Activated T-helper 1 cell treated with anti-CD3 and anti-CD28 coated beads, Interleukin-12 subunit alpha, Interleukin-12 subunit beta, Interleukin-2, Interleukin-4 antibody, amounts not matched to agents 30 ng/mL and 10 ng/mL and 1 ng/mL, durations not matched to agents 14 hours and 24 hours and 36 hours (primary cell): ENCODE measurements at regions of chr7 and their contacts with region 1.

Region 1: GRCh38 chr7:146496657-146497056 is 380.1 kb downstream of the CNTNAP2 start:
- DNase-seq: no peak
- H3K4me3 Mint-ChIP-seq: no peak overlapping the region
- H3K27ac Mint-ChIP-seq: no peak overlapping the region
- H3K4me1 Mint-ChIP-seq: no peaks in the 10 kb centered on the region
- H3K27me3 Mint-ChIP-seq: no peaks in the 10 kb centered on the region

Region 2: DNA sequence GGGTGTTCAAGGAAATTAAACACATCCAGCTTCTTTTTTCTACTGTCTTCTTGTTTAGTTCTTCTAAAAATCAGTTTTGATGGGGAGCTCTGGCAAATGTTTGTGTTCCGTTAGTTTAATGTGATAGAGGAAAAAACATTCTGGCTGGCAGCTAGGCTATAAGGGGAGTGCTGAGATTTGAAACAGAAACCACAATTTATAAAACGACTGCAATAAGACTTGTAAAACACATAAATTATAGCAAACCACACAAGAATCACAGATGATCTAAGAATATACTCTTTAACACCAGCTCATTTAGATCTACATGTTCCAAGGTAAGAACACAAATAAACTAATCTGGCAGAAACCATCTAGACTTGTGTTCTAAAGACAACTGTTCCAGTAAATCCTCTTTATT is 45.4 kb after region 1 on chr7:
- intact Hi-C with region 1: loop called (anchors 1 kb)
- DNase-seq: no peak
- H3K4me3 Mint-ChIP-seq: no peak overlapping the region
- H3K27ac Mint-ChIP-seq: no peak overlapping the region
- H3K4me1 Mint-ChIP-seq: no peaks in the 10 kb centered on the region
- H3K27me3 Mint-ChIP-seq: no peaks in the 10 kb centered on the region

Region 3: DNA sequence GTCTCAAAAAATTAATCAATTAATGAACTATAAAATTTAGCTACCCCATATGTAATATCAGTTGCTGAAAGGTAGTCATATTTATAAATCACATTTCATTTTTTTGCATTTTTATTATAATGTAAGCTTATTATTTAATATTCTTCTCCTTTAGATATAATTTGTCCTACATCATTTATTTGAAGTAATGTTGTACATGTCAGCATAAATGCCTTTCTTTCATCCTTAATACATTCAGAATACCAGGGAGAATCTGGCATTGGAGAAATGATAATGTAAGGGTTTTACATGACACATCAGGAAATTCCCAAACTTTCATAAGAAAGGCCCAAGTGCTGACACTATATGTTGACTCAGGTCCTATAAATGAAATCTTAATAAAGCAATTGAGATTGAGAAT is 362.0 kb after region 1 on chr7:
- intact Hi-C with region 1: no loop called
- DNase-seq: no peak
- H3K4me3 Mint-ChIP-seq: no peak overlapping the region
- H3K27ac Mint-ChIP-seq: no peak overlapping the region
- H3K4me1 Mint-ChIP-seq: no peaks in the 10 kb centered on the region
- H3K27me3 Mint-ChIP-seq: no peaks in the 10 kb centered on the region